ENCODE measurements at regions of chr20 and their contacts with region 1.

Region 1: GRCh38 chr20:24277196-24277595 is 192.2 kb upstream of the SYNDIG1 start:
- DNase-seq: no peak
- H3K4me3 ChIP-seq: no peak overlapping the region
- H3K4me3 Mint-ChIP-seq: no peak overlapping the region
- H3K27ac ChIP-seq: no peak overlapping the region
- H3K27ac Mint-ChIP-seq: no peak overlapping the region
- H3K4me1 ChIP-seq: no peaks in the 10 kb centered on the region
- H3K4me1 Mint-ChIP-seq: no peaks in the 10 kb centered on the region
- H3K27me3 ChIP-seq: no peaks in the 10 kb centered on the region
- H3K27me3 Mint-ChIP-seq: no peaks in the 10 kb centered on the region

Region 2: GRCh38 chr20:24337069-24337468 is 59.9 kb after region 1 on chr20:
- CTCF ChIA-PET with region 1: no interaction called
- POLR2A ChIA-PET with region 1: no interaction called
- intact Hi-C with region 1: loop called (anchors 10 kb)
- DNase-seq: no peak
- H3K4me3 ChIP-seq: no peak overlapping the region
- H3K4me3 Mint-ChIP-seq: no peak overlapping the region
- H3K27ac ChIP-seq: no peak overlapping the region
- H3K27ac Mint-ChIP-seq: no peak overlapping the region
- H3K4me1 ChIP-seq: no peaks in the 10 kb centered on the region
- H3K4me1 Mint-ChIP-seq: no peaks in the 10 kb centered on the region
- H3K27me3 ChIP-seq: no peaks in the 10 kb centered on the region
- H3K27me3 Mint-ChIP-seq: peaks cover 4 to 6% of the 10 kb centered on the region in 2 donors

Measured in CD4-positive, alpha-beta memory T cell (primary cell).